ENCODE measurements at regions of chr16 and their contacts with region 1.

Region 1: GRCh38 chr16:84795329-84796053 is 24.3 kb upstream of the CRISPLD2 start:
- DNase-seq: peak; percentile 94

Region 2: GRCh38 chr16:84096115-84097012 is 699.1 kb before region 1 on chr16:
- intact Hi-C with region 1: no loop called
- DNase-seq: no peak

Region 3: DNA sequence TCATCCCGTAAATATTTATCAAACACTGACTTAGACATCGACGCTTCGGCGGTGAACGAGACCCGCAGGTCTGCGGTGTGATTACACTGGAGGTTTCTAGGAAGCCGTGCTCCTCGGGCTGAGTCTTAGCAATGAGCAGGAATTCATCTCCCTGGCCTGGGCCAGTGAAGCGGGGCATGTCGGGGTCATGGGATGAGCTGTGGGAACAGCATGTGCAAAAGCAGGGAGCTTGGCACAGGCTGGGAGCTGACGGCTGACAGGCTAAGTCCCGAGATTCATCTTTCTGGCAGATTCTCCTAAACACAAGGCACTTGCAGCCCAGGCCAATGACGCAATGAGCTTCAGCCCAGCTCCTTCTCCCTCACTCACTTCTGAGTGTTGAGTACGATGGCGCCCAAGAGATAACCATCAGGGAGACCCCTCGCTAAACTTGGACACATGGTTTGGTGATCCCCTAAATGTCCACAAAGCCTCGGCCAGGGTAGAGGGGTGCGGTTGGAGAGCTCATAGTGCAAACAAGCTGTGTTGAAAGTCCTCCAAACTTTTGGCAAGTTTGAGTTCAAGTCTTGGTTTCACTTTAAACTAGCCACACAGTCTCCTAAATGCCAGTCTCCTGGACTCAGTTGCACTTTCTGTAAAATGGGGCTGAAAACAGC is 37.1 kb after region 1 on chr16:
- intact Hi-C with region 1: loop called in 1 of 2 experiments (anchors 5 kb)
- DNase-seq: peak; percentile 97

Region 4: GRCh38 chr16:84867696-84868095 is 72.2 kb after region 1 on chr16:
- intact Hi-C with region 1: loop called in 1 of 2 experiments (anchors 2 kb)
- DNase-seq: no peak